Activated CD8-positive, alpha-beta T cell treated with anti-CD3 and anti-CD28 coated beads, Interleukin-2, amount 10 ng/mL, durations not matched to agents 7 days and 5 days (primary cell): ENCODE measurements at regions of chr1 and their contacts with region 1.

Region 1: DNA sequence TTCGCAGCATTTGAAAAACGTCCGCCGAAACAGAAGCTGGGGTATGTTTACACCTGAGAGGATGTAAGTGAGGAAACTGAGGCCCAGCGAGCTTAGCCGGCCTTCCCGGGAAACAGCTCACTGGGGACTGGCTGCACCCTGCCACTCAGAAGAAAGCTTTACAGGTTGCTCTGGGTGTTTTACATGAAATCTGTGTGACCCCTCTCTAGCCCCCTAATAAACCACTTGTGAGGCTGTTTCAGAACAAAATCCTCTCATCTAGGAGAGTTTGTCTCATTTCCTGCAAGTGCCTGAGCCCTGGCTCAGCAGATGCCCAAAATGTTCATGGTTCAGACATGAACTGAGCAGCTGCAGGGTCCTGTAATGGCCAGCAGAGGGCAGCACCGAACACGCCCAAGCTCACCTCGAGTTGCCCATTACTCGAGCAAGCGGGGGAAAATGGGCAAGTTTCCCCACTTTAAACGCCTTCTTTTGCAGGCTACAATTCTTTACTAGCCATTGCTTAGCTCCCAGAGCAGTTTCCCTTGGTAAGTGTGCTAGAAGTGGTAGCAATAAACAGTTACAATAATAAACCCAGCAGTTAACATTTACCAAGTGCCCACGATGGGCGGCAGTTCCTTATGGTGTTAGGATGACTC is 76.4 kb downstream of the FHAD1 start:
- DNase-seq: peak; percentile 83
- ATAC-seq: peak; percentile 88
- H3K4me3 Mint-ChIP-seq: no peak overlapping the region
- H3K27ac Mint-ChIP-seq: no peak overlapping the region
- H3K4me1 Mint-ChIP-seq: peaks cover 4% of the 10 kb centered on the region
- H3K27me3 Mint-ChIP-seq: peaks cover 22% of the 10 kb centered on the region

Region 2: DNA sequence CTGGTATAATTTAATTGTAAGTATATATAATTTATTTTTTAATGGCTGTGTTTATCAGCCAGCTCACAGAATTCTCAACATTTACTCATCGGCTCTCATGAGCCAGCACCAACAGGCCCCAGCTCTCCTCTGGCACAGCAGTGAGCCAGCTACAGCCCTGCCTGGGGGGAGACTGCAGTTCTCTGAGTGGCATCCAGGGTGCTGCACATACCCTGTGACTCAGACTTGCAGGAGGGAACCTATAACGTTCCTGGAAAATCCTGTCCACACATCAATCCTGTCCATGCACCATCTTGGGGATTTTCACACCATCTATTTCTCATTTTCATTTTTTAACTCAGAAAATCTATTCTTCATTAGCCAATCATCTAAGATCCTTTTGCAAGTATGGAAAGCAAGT is 39.9 kb before region 1 on chr1:
- CTCF ChIA-PET with region 1: no interaction called
- POLR2A ChIA-PET with region 1: no interaction called
- DNase-seq: no peak
- ATAC-seq: no peak
- H3K4me3 Mint-ChIP-seq: no peak overlapping the region
- H3K27ac Mint-ChIP-seq: no peak overlapping the region
- H3K4me1 Mint-ChIP-seq: no peaks in the 10 kb centered on the region
- H3K27me3 Mint-ChIP-seq: peaks cover 10% of the 10 kb centered on the region

Region 3: DNA sequence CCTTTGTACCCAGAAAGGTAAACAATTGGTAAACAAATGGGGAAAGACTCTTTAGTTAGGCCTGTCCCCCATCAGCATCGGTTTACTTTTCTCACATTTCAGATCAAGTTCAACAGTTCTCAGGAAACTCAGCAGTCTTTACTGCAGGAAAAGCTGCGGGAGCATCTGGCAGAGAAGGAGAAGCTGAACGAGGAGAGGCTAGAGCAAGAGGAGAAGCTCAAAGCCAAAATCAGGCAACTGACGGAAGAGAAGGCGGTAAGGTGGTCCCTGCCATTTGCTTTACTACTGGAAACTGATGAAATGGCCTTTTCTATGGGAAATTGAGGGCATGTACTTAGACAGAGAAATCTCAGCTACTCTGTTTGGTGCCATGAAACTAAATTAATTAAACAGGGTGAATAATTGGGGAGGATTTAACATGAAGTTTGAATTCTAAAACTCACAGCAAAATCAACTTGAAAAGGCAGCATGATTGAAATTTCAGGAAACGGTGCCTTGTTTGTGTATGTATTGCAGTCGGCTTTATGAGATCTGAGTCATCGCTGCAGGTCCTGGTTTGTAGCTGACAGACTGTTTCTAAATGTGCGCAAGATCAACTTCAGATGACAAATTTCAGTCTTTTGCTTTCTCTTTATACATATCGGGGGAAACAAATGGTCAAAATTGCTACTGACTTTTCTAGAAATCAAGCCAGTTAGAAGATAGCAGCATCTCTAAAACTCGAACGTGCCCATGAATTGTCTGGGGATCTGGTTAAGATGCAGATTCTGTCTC is 18.4 kb after region 1 on chr1:
- CTCF ChIA-PET with region 1: interaction called, 28 read pairs
- POLR2A ChIA-PET with region 1: no interaction called
- DNase-seq: no peak
- ATAC-seq: no peak
- H3K4me3 Mint-ChIP-seq: no peak overlapping the region
- H3K27ac Mint-ChIP-seq: peak overlapping the region; percentile 15
- H3K4me1 Mint-ChIP-seq: peaks cover 62% of the 10 kb centered on the region
- H3K27me3 Mint-ChIP-seq: peaks cover 9% of the 10 kb centered on the region

Region 4: DNA sequence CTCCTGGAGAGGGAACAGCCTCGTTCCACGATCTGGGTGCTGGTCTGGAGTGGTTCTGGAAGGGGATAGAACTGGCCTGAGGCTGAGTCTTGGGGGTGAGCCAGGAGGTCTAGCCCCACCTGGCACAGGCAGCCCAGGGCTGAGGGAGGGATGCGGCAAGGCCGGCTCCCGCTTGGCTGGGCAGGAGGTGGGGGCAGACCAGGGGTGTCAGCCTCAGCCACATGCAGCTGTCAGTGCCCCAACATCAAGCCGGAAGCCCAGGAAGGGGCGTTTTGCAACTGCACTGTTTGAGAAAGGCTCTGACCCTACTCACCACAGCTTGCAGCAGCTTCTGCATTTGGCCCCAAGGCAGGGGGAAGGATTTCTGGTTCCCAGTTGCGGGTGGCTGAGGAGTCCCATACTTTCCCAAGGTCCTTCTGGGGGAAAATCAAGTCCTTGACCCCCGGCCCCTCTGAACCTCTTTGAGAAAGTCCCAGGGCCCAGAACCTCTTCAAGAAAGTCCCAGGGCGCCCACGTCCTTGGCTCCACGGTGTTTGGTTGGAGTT is 88.2 kb after region 1 on chr1:
- CTCF ChIA-PET with region 1: interaction called, 13 read pairs
- POLR2A ChIA-PET with region 1: no interaction called
- DNase-seq: peak; percentile 61
- ATAC-seq: peak; percentile 5
- H3K4me3 Mint-ChIP-seq: peak overlapping the region; percentile 89
- H3K27ac Mint-ChIP-seq: peak overlapping the region; percentile 80
- H3K4me1 Mint-ChIP-seq: peaks cover 54% of the 10 kb centered on the region
- H3K27me3 Mint-ChIP-seq: peaks cover 23% of the 10 kb centered on the region

Region 5: GRCh38 chr1:15417365-15417934 is 94.0 kb after region 1 on chr1:
- CTCF ChIA-PET with region 1: interaction called, 13 read pairs
- POLR2A ChIA-PET with region 1: no interaction called
- DNase-seq: peak; percentile 52
- ATAC-seq: peak; percentile 43
- H3K4me3 Mint-ChIP-seq: peak overlapping the region; percentile 43
- H3K27ac Mint-ChIP-seq: peak overlapping the region; percentile 62
- H3K4me1 Mint-ChIP-seq: peaks cover 53% of the 10 kb centered on the region
- H3K27me3 Mint-ChIP-seq: no peaks in the 10 kb centered on the region

Region 6: DNA sequence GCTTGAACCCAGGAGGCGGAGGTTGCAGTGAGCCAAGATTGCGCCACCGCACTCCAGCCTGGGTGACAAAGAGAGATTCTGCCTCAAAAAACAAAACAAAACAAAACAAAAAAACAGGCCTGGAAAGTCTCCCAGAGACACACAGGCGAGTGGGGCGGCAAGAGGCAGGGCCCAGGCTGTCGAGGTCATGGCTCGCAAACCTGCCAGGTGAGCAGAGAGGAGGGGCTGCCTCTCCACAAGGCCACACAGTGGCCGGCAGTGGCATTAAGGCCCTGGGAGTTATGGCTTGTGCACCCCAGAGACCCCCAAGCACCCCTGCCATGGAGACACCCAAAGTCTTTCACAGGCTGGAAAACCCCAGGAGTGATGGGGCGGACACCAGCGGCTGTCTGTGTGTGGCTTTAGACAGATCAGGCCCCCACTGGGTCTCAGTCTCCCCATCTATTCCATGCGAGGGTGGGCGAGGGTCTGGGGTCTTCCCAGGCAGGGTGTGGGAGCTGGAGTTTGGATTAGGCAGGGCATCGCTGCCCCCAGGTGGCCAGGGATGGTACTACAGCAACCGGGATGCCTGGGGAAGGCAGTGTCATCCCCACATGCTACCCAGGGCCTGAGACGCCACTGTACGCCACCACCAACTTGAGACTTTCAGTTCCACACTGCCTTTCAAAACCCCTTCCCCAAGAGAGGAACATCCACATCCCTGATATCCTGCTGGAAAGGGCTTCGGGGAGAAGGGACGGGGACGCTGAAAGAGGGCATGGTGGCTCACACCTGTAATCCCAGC is 107.5 kb after region 1 on chr1:
- CTCF ChIA-PET with region 1: interaction called, 109 read pairs
- POLR2A ChIA-PET with region 1: interaction called, 7 read pairs
- DNase-seq: peak; percentile 74
- ATAC-seq: peak; percentile 56
- H3K4me3 Mint-ChIP-seq: no peak overlapping the region
- H3K27ac Mint-ChIP-seq: no peak overlapping the region
- H3K4me1 Mint-ChIP-seq: peaks cover 8% of the 10 kb centered on the region
- H3K27me3 Mint-ChIP-seq: no peaks in the 10 kb centered on the region

Region 7: GRCh38 chr1:15436881-15437442 is 113.5 kb after region 1 on chr1:
- CTCF ChIA-PET with region 1: interaction called, 109 read pairs
- POLR2A ChIA-PET with region 1: interaction called, 3 read pairs
- DNase-seq: no peak
- ATAC-seq: no peak
- H3K4me3 Mint-ChIP-seq: no peak overlapping the region
- H3K27ac Mint-ChIP-seq: no peak overlapping the region
- H3K4me1 Mint-ChIP-seq: no peaks in the 10 kb centered on the region
- H3K27me3 Mint-ChIP-seq: no peaks in the 10 kb centered on the region